ENCODE measurements at regions of chr2 and their contacts with region 1.

Region 1: DNA sequence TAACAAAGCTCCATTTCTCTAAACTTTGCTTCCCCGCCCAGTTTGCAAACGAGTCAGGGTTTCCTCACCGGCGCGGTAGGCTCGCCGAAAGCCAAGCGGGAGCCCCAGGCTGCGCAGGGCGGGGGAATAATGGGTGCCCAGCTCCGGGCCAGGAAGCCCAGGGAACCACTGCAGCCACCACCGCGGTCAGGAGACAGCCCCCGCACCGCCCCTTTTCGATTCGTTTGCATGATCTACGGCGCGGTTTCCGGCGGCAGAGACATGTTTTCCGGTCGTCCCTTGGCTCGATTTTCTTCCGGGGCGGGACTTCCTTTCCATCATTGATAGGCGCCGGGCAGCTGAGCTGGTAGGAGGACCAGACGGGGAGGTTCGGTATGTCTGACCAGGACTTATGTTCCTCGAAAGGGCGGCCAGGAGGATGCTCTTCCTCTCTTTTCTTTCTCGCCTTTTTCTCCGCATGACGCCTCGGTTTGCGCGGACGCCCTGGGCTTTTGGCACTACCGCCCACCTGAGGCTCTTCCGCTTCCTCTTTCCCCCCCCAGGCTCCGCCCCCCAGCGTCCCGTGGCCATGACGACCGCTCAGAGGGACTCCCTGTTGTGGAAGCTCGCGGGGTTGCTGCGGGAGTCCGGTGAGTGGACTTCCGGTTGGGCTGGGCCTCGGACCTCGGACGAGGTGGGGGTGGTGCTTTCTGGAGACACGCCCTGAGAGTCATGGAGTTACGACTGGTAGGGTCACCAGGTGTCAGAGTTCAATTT is at the start of gene STK11IP:
- DNase-seq: peak; percentile 98
- H3K4me3 Mint-ChIP-seq: peak within 1 kb of the TSS; percentile 98
- H3K27ac Mint-ChIP-seq: peak within 1 kb of the TSS; percentile 98
- H3K4me1 Mint-ChIP-seq: peaks cover 22% of the 10 kb centered on the region
- H3K27me3 Mint-ChIP-seq: peaks cover 2% of the 10 kb centered on the region
- total RNA-seq, gene STK11IP: 32.6 and 35.0 TPM in 2 replicates

Region 2: GRCh38 chr2:218995972-218996711 is 601.6 kb before region 1 on chr2:
- intact Hi-C with region 1: no loop called
- DNase-seq: peak; percentile 93
- H3K4me3 Mint-ChIP-seq: peak overlapping the region; percentile 34
- H3K27ac Mint-ChIP-seq: no peak overlapping the region
- H3K4me1 Mint-ChIP-seq: peaks cover 3% of the 10 kb centered on the region
- H3K27me3 Mint-ChIP-seq: peaks cover 81% of the 10 kb centered on the region

Region 3: GRCh38 chr2:219177552-219178376 is 420.0 kb before region 1 on chr2 and contains the start of gene RETREG2:
- intact Hi-C with region 1: no loop called
- DNase-seq: peak; percentile 93
- H3K4me3 Mint-ChIP-seq: peak within 1 kb of the TSS; percentile 94
- H3K27ac Mint-ChIP-seq: peak within 1 kb of the TSS; percentile 99
- H3K4me1 Mint-ChIP-seq: peaks cover 62% of the 10 kb centered on the region
- H3K27me3 Mint-ChIP-seq: no peaks in the 10 kb centered on the region
- total RNA-seq, gene RETREG2: 54.1 and 57.4 TPM in 2 replicates

Region 4: GRCh38 chr2:219245148-219245898 is 352.4 kb before region 1 on chr2 and contains the starts of genes GLB1L and STK16:
- intact Hi-C with region 1: loop called (anchors 2 kb)
- DNase-seq: peak; percentile 98
- H3K4me3 Mint-ChIP-seq: peak within 1 kb of the TSS; percentile 80
- H3K27ac Mint-ChIP-seq: peak within 1 kb of the TSS; percentile 99
- H3K4me1 Mint-ChIP-seq: peaks cover 58% of the 10 kb centered on the region
- H3K27me3 Mint-ChIP-seq: no peaks in the 10 kb centered on the region
- total RNA-seq, gene GLB1L: 4.6 and 4.9 TPM in 2 replicates
- total RNA-seq, gene STK16: 29.1 and 31.7 TPM in 2 replicates

Region 5: DNA sequence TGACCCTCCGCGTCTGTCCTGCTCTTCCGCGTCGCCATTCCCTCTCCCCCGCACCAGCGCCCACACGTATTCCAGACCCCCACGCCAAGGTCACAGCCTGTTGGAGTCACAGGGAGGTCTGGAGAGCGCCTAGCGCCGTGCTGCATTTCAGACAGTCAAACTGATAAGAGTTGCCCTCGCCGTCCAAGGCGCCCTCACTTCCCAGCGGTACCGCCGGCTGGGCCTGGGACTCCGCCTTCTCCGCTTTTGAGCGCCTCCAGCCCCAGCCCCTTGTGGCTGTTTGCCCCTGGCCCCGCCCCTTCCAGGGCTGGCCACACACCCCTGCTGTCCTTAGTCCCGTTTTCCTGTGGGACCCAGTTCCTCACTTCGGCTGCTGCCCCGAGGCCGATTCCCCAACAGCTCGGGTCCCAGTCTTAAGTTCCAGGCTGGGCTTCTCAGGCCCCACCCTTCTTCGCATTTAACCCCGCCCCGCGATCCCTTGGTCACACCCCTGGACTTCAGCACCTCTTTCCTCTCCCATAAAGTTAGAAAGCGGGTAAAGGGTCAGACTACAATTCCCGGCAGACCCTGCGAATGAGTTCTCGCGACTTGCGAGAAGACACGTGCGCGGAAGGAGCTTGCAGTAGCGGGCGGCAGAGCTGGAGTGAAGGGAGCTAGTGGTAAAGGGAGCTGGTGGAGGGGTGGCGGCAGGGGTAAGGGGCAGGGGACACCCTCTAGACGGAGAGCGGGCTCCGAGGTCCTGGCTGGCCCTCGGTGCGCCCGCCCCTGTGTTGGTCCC is 99.3 kb before region 1 on chr2 and contains the start of gene GMPPA:
- intact Hi-C with region 1: loop called (anchors 1 kb)
- DNase-seq: peak; percentile 99
- H3K4me3 Mint-ChIP-seq: peak within 1 kb of the TSS; percentile 97
- H3K27ac Mint-ChIP-seq: peak within 1 kb of the TSS; percentile 83
- H3K4me1 Mint-ChIP-seq: peaks cover 26% of the 10 kb centered on the region
- H3K27me3 Mint-ChIP-seq: peaks cover 39% of the 10 kb centered on the region
- total RNA-seq, gene GMPPA: 45.5 and 46.0 TPM in 2 replicates

Region 6: DNA sequence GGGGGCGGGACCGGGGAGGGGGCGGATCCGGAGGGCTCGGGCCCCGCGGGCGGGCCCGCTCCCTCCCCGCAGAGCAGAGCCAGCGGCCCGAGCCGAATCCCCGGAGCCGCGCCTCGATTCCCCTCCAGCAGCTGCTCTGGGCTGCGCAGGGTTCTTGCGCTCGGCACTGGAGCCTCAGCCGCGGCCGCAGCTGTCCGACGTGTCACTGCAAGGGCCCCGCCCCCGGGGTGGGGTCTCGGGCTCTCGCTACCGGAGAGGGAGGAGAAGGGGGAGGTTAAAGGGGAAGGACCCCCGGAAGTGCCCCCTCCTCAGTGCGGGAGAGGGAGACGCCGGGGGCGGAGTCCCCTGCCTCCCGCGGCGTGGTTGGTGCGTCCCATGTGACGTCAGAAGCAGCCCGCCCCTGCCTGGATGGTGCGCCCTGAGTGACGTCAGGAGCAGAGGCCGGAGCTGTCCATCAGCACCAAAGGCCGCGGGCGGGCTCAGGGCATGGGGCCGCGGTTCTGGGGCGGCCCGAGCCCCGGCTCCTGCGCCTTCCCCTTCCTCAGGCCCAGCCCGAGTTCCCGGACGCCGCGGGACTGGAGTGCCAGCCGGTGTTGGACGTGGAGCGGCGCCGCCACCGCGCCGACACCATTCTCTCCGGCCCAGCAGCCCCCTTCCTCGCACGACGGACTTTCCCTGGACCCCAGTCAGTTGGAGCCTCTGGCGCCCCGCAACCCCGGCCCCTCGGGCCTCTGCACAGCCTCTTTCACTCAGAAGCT is 54.0 kb before region 1 on chr2 and contains the starts of genes CHPF and TMEM198:
- intact Hi-C with region 1: loop called (anchors 1 kb)
- DNase-seq: peak; percentile 99
- H3K4me3 Mint-ChIP-seq: peak within 1 kb of the TSS; percentile 89
- H3K27ac Mint-ChIP-seq: peak within 1 kb of the TSS; percentile 75
- H3K4me1 Mint-ChIP-seq: peaks cover 17% of the 10 kb centered on the region
- H3K27me3 Mint-ChIP-seq: peaks cover 18% of the 10 kb centered on the region
- total RNA-seq, gene CHPF: 37.8 and 38.3 TPM in 2 replicates
- total RNA-seq, gene TMEM198: 3.1 and 3.4 TPM in 2 replicates

Region 7: DNA sequence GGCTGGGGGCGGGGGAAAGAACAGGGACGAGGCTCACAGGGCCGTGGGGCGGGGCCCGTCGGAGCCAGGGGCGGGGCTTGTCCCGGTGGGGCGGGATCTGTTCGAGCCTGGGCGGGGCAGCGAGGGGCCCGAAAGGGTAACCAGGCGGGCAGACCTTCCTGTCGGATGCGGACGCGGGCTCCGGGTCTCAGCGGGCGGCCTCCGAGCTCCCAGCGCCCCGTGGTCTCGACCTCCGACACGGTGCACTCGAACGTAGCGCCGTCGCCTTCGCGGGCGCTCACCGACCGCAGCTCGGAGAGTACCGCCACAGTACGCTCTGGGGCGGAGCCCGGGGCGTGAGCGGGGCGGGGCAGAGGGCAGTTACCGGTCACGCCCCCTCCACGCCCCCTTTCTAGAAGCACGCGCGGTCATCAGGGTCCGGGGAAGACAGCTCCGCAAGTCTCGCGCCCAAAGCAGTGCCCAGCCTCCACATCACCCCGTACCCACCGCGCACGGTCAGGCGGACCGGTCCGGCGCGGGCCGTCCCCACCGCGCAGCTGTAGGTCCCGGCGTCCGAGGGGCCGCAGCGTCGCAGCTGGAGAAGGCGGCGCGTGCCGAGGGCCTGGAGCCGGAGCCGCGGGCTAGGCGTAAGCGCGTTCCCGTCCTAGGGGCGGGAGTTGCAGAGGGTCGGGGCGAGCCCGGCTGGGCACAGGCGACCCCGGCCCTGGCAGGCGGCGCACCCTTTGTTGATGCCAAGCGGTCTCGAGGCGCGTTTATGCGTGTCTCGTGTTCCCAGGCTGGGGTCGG is 45.2 kb before region 1 on chr2:
- intact Hi-C with region 1: loop called (anchors 1 kb)
- DNase-seq: peak; percentile 96
- H3K4me3 Mint-ChIP-seq: peak overlapping the region; percentile 88
- H3K27ac Mint-ChIP-seq: peak overlapping the region; percentile 58
- H3K4me1 Mint-ChIP-seq: peaks cover 5% of the 10 kb centered on the region
- H3K27me3 Mint-ChIP-seq: peaks cover 23% of the 10 kb centered on the region

Region 8: DNA sequence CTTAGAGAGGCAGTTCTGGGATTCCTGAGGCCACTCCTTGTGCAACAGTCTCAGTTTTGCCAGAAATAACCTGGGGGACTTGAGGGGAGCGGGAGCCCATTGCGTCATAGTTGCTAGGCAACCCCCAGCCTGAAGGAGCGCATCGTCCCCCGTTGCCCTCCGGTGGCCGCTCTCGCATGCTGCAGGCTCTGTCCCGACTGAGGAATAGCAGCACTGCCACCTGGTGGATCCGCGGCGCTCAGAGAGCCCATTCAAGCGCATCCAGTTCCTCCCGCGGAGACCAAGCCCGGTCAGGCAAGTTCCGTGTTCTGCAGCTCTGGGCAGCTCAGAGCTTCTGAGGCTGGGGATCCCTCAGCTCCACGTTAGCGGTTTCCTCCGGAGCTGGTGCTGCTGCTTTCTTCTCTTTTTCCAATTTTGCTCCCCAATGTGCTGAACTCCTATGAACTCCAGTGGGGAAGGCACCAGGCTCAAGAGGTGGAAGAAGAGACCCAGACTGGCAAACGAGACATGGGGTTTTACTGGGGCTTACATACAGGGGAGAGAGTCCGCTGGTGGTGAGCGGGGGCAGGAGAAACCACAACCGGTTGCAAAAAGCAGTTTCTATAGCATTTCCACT is 44.8 kb after region 1 on chr2:
- intact Hi-C with region 1: loop called (anchors 5 kb)
- DNase-seq: peak; percentile 97
- H3K4me3 Mint-ChIP-seq: no peak overlapping the region
- H3K27ac Mint-ChIP-seq: no peak overlapping the region
- H3K4me1 Mint-ChIP-seq: no peaks in the 10 kb centered on the region
- H3K27me3 Mint-ChIP-seq: no peaks in the 10 kb centered on the region